ENCODE measurements at regions of chr7 and their contacts with region 1.

Region 1: GRCh38 chr7:151511946-151512345 is 7.7 kb downstream of the RHEB start:
- DNase-seq: no peak
- ATAC-seq: no peak
- H3K4me3 ChIP-seq: no peak overlapping the region
- H3K27ac ChIP-seq: peak overlapping the region in 4 of 12 donors; percentile 12 to 98 (median 18)
- H3K4me1 ChIP-seq: peaks cover 2 to 98% (median 64%) of the 10 kb centered on the region in 12 donors
- H3K27me3 ChIP-seq: no peaks in the 10 kb centered on the region
- CTCF ChIP-seq: no peak
- POLR2A ChIP-seq: no peak

Region 2: DNA sequence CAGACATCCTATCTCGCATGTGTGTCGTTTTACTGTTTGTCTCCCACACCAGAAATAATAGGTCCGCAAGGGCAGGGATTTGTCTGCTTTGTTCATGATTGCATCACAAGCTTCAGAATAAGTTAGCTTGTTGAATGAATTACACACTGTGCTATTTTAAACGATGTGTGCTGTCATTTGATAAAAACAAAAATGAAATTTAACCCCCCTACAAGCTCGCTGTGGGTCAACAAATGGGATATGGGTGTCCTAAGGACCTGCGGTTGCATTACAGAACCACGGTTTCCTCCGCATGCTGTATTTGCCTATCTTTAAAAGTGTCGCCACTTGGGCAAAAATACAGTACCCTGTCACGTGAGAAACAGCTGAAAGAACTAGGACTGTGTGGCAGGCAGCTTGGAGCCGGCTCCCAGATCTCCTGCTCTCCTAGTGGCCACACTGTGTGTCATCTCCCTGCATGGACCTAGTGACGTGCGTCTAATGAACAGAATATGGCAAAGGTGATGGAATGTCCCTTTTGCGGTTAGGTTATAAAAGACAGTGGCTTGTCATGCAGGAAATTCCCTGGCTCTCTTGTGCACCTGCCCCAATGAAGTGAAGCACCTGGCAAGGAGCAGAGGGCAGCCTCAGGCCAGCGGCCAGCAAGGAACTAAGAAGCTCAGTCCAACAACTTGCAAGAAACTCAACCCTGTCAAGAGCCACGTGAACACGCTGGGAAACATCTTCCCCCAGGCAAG is 39.1 kb before region 1 on chr7:
- intact Hi-C with region 1: loop called in 2 of 10 experiments (anchors 5 kb)
- DNase-seq: no peak
- ATAC-seq: peak; percentile 33 to 73 (median 66)
- H3K4me3 ChIP-seq: no peak overlapping the region
- H3K27ac ChIP-seq: peak overlapping the region in 7 of 12 donors; percentile 21 to 51 (median 32)
- H3K4me1 ChIP-seq: peaks cover 0 to 34% (median 15%) of the 10 kb centered on the region in 12 donors
- H3K27me3 ChIP-seq: no peaks in the 10 kb centered on the region
- CTCF ChIP-seq: no peak
- POLR2A ChIP-seq: no peak